GM13977 (cell line): ENCODE measurements at regions of chr2 and their contacts with region 1.

Region 1: GRCh38 chr2:8681786-8682692 is at the start of gene ID2:
- DNase-seq: peak; percentile 99
- CTCF ChIP-seq: no peak

Region 2: GRCh38 chr2:7427293-7428060 is 1254.6 kb before region 1 on chr2:
- in situ Hi-C with region 1: loop called (anchors 10 kb)
- DNase-seq: peak; percentile 65
- CTCF ChIP-seq: peak; percentile 63

Region 3: GRCh38 chr2:8259106-8259840 is 422.8 kb before region 1 on chr2:
- in situ Hi-C with region 1: no loop called
- DNase-seq: no peak
- CTCF ChIP-seq: no peak

Region 4: GRCh38 chr2:8303322-8303832 is 378.7 kb before region 1 on chr2:
- in situ Hi-C with region 1: loop called (anchors 25 kb)
- DNase-seq: peak; percentile 63
- CTCF ChIP-seq: no peak